Cardiac septum (tissue), 1 donor: ENCODE measurements at regions of chr5 and their contacts with region 1.

Region 1: DNA sequence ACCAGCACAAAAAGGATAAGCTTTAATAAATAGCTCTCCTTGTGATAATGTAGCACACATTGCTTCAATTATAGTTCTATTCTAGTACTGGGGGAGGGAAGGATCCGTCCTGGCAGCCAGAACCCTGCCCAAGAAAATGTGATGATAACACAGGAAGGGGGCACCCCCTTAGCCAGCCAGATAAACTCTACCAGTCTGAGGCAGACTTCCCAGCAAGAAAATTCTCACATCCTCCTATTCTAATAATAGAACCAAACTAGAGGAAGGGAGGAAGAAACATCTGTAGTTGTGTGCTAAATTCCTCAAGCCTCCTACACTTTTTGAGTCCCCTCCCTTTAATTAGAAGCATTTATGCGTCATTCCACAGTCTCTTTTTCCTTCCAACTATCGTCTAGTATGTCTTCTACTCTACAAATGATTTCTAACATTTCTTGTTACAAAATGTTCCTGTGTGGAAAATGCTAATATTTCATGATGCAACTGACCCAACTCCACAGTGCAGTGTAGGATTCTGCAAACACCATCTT is 261.0 kb downstream of the SEMA5A start:
- DNase-seq: no peak

Region 2: GRCh38 chr5:9507974-9508373 is 223.1 kb after region 1 on chr5:
- intact Hi-C with region 1: loop called (anchors 10 kb)
- DNase-seq: no peak

Region 3: DNA sequence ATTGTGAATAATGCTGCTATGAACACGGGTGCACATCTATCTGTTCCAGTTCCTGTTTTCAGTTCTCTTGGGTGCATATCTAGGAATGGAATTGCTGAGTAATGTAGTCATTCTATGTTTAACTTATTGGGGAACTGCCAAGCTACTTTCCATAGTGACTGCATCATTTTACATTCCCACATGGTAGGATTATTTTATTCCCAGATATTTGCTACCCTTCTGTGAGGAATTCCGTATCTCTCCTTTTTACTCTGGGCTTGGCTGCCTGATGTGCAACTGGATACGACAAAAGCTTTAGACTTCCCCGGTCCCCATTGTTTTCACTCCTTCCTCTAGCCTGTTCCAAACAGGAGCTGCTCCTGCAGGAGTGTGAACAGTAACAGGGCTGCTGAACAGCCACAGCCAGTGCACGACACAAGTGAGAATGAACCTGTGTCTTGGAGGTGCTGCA is 338.2 kb after region 1 on chr5:
- intact Hi-C with region 1: loop called (anchors 5 kb)
- DNase-seq: no peak

Region 4: GRCh38 chr5:9698125-9698826 is 413.4 kb after region 1 on chr5:
- intact Hi-C with region 1: no loop called
- DNase-seq: no peak